GM18951 (cell line): ENCODE measurements at regions of chr6 and their contacts with region 1.

Region 1: GRCh38 chr6:27518881-27519795 is 46.2 kb upstream of the ZNF184 start:
- POLR2A ChIP-seq: no peak

Region 2: DNA sequence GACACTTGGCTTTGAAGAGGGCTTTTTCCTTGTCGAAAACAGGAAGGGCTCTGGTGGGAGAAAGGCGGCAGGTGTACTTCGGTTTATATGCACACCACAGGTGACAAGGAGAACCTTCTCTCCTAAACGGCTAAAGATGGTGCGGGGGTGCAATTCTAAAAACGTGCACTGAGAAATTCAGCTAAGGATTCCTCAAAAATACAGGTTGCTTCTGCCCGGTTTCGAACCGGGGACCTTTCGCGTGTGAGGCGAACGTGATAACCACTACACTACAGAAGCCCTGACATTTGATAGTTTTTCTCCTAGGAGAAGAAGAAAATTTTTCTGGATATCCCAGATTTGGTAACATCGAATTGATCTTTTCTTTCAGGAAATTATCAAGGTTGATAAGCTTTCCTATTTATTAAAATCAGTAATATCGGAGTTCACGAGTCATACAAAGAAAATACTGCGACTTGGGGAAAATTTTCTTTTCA is 239.0 kb before region 1 on chr6:
- in situ Hi-C with region 1: no loop called
- POLR2A ChIP-seq: no peak

Region 3: GRCh38 chr6:27374824-27375612 is 144.1 kb before region 1 on chr6:
- in situ Hi-C with region 1: no loop called
- POLR2A ChIP-seq: no peak

Region 4: GRCh38 chr6:27753668-27754407 is 234.7 kb after region 1 on chr6:
- in situ Hi-C with region 1: loop called (anchors 25 kb)
- POLR2A ChIP-seq: peak; percentile 36